CD8-positive, alpha-beta T cell (primary cell): ENCODE measurements at regions of chr3 and their contacts with region 1.

Region 1: DNA sequence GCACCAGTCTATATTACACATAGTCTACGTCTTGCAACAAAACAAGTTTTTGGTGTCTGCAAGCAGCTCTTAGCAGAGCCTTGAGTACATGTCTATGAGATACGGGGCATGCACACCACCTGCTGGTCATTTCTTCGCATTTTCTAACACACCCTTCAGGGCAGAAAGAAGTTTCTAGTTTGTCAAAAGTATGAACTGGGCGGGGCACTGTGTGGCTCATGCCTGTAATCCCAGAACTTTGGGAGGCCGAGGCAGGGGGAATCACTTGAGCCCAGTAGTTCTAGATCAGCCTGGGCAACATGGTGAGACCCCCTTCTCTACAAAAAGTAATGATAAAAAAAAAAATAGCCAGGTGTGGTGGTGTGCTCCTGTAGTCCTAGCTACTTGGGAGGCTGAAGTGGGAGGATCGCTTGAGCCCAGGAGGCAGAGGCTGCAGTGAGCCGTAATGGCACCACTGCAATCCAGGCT is 64.2 kb upstream of the ARL8B start:
- DNase-seq: peak; percentile 34 to 87 (median 69)
- ATAC-seq: peak; percentile 96
- H3K4me3 ChIP-seq: no peak overlapping the region
- H3K4me3 Mint-ChIP-seq: no peak overlapping the region
- H3K27ac ChIP-seq: no peak overlapping the region
- H3K27ac Mint-ChIP-seq: no peak overlapping the region
- H3K4me1 ChIP-seq: no peaks in the 10 kb centered on the region
- H3K4me1 Mint-ChIP-seq: no peaks in the 10 kb centered on the region
- H3K27me3 ChIP-seq: peaks cover 0 to 4% of the 10 kb centered on the region in 2 experiments
- H3K27me3 Mint-ChIP-seq: peaks cover 2% of the 10 kb centered on the region
- CTCF ChIP-seq: peak; percentile 63

Region 2: DNA sequence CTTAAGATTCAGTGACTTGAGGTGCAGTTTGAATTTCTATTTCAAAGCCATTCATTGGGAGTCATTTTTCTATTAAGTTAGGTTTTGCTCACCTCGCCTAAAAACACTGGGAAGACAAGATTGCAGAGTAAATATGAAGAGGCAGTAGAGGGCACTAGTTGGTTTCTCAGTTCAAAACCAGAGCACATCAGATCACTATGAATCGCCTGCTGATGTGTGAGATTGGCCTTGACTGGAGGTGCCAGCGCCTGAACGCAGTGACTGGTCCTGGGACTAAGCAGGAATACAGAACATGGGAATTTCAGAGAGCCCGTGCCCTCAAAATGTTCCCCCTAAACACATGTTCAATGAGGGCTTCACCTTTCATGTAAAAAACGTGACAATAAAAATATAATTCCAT is 335.8 kb before region 1 on chr3:
- CTCF ChIA-PET with region 1: interaction called, 300 read pairs
- POLR2A ChIA-PET with region 1: no interaction called
- intact Hi-C with region 1: no loop called
- DNase-seq: peak in 2 of 9 experiments; percentile 38 to 52
- ATAC-seq: no peak
- H3K4me3 ChIP-seq: no peak overlapping the region
- H3K4me3 Mint-ChIP-seq: no peak overlapping the region
- H3K27ac ChIP-seq: no peak overlapping the region
- H3K27ac Mint-ChIP-seq: no peak overlapping the region
- H3K4me1 ChIP-seq: no peaks in the 10 kb centered on the region
- H3K4me1 Mint-ChIP-seq: no peaks in the 10 kb centered on the region
- H3K27me3 ChIP-seq: no peaks in the 10 kb centered on the region
- H3K27me3 Mint-ChIP-seq: no peaks in the 10 kb centered on the region
- CTCF ChIP-seq: no peak

Region 3: GRCh38 chr3:4904811-4905695 is 152.8 kb before region 1 on chr3:
- CTCF ChIA-PET with region 1: interaction called, 3 read pairs
- POLR2A ChIA-PET with region 1: no interaction called
- intact Hi-C with region 1: loop called in 1 of 2 experiments (anchors 5 kb)
- DNase-seq: peak in 2 of 9 experiments; percentile 24 to 41
- ATAC-seq: no peak
- H3K4me3 ChIP-seq: no peak overlapping the region
- H3K4me3 Mint-ChIP-seq: no peak overlapping the region
- H3K27ac ChIP-seq: no peak overlapping the region
- H3K27ac Mint-ChIP-seq: no peak overlapping the region
- H3K4me1 ChIP-seq: peaks cover 18% of the 10 kb centered on the region
- H3K4me1 Mint-ChIP-seq: peaks cover 50% of the 10 kb centered on the region
- H3K27me3 ChIP-seq: no peaks in the 10 kb centered on the region
- H3K27me3 Mint-ChIP-seq: no peaks in the 10 kb centered on the region
- CTCF ChIP-seq: no peak